Mammary epithelial cell (primary cell): ENCODE measurements at regions of chr3 and their contacts with region 1.

Region 1: DNA sequence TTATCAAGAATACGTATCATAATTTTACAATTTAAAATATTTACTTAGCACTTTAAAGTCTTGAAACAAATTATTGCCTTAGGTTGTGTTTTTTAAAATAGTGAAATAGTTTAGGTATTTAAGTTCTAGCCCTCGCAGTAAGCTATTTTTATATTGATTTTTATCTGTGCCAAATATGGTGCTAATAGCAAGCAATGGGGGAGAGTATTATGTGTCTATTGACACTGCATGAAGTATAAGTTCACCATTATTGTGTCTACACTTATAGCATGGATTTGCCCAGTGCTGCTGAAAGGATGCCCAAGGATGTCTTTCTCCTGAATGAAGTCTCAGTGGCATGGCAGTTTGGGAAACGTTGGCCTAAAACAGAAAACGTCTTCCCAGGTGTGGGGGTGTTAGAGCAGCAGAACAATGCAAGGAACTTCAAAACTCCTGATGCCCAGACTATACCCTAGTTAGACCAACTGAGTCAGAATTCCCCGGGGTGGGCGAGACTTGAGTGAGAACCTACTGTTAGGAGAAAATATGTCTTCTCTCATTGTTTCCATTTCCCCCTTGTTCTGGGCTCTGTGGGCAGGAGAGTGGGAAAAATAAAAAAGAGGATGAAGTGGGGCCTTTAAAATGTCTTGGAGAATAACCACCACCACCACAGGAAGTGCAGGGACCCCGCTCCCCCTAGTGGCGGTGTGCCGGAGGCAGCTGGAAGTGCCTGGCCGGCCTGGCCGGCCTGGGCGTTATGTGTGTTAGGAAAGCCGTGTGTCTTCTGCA is 104.2 kb upstream of the SLC7A14 start:
- DNase-seq: no peak
- H3K4me3 ChIP-seq: no peak overlapping the region
- H3K27ac ChIP-seq: peak overlapping the region; percentile 92
- H3K4me1 ChIP-seq: peaks cover 36% of the 10 kb centered on the region
- H3K27me3 ChIP-seq: no peaks in the 10 kb centered on the region
- CTCF ChIP-seq: peak; percentile 56 to 63

Region 2: GRCh38 chr3:170499565-170500156 is 190.4 kb before region 1 on chr3:
- CTCF ChIA-PET with region 1: interaction called, 4 read pairs
- dilution Hi-C with region 1: no loop called
- in situ Hi-C with region 1: no loop called
- intact Hi-C with region 1: loop called (anchors 5 kb)
- DNase-seq: peak; percentile 41
- H3K4me3 ChIP-seq: no peak overlapping the region
- H3K27ac ChIP-seq: no peak overlapping the region
- H3K4me1 ChIP-seq: peaks cover 8% of the 10 kb centered on the region
- H3K27me3 ChIP-seq: no peaks in the 10 kb centered on the region
- CTCF ChIP-seq: peak; percentile 60 to 80

Region 3: GRCh38 chr3:170531657-170532335 is 158.3 kb before region 1 on chr3:
- CTCF ChIA-PET with region 1: no interaction called
- dilution Hi-C with region 1: no loop called
- in situ Hi-C with region 1: no loop called
- intact Hi-C with region 1: no loop called
- DNase-seq: no peak
- H3K4me3 ChIP-seq: no peak overlapping the region
- H3K27ac ChIP-seq: no peak overlapping the region
- H3K4me1 ChIP-seq: no peaks in the 10 kb centered on the region
- H3K27me3 ChIP-seq: no peaks in the 10 kb centered on the region
- CTCF ChIP-seq: no peak

Region 4: DNA sequence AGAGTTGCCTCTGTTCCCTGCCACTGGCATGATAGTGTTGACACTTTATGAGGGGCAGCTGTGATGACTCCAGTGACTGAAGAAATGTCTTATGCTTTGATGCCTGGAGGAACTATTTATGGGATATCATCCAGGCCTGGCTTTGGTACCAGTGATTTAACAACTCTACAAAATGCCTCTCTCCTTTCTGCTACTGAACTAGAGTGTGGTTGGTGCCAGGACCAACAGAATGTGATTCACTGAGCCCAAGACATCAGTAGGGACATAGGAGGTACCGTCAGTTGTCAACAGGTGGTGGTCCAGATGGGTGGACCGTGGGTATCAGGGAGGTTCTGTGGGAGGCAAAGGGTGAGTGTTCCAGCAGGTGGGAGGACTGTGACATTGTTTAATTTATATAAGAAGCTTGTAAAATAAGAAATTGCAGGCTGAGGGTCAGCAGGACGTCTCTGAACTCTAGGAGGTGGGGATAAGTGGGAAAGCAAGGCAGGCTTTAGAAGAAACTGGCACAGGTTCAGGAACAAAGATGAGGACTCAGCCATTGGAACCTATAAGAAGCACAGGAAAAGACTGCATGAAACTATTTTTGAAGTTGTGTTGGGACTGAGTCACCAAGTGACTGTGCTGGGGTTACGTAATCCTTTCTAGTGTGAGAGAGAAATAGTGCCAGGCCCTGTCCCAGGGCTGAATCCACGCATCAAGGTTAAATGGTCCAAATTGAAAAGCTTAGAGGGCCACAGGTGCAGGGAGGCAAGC is 75.7 kb before region 1 on chr3:
- CTCF ChIA-PET with region 1: no interaction called
- dilution Hi-C with region 1: no loop called
- in situ Hi-C with region 1: no loop called
- intact Hi-C with region 1: loop called (anchors 2 kb)
- DNase-seq: peak; percentile 90
- H3K4me3 ChIP-seq: no peak overlapping the region
- H3K27ac ChIP-seq: peak overlapping the region; percentile 9
- H3K4me1 ChIP-seq: peaks cover 9% of the 10 kb centered on the region
- H3K27me3 ChIP-seq: no peaks in the 10 kb centered on the region
- CTCF ChIP-seq: no peak

Region 5: DNA sequence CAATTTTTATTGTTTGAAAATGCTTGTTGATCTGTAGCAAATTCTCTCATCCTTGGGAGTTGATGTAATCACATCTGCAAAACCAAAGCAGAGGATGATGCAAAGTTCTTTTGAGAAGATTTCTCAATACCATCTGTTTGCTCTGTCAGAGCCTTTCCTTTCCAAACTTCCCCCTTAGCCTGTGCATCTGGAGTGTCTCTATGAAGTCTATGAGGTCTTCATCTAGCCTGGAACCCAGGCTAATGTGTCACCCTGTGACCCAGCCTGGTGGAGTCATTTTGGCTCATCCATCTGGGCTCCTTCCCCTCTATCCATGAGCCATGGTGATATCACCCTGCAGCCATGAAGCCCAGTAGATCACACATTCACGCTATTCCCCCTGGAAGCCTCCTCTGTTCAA is 19.0 kb after region 1 on chr3:
- CTCF ChIA-PET with region 1: no interaction called
- dilution Hi-C with region 1: no loop called
- in situ Hi-C with region 1: no loop called
- intact Hi-C with region 1: loop called (anchors 2 kb)
- DNase-seq: peak; percentile 61
- H3K4me3 ChIP-seq: no peak overlapping the region
- H3K27ac ChIP-seq: no peak overlapping the region
- H3K4me1 ChIP-seq: peaks cover 49% of the 10 kb centered on the region
- H3K27me3 ChIP-seq: no peaks in the 10 kb centered on the region
- CTCF ChIP-seq: no peak

Region 6: DNA sequence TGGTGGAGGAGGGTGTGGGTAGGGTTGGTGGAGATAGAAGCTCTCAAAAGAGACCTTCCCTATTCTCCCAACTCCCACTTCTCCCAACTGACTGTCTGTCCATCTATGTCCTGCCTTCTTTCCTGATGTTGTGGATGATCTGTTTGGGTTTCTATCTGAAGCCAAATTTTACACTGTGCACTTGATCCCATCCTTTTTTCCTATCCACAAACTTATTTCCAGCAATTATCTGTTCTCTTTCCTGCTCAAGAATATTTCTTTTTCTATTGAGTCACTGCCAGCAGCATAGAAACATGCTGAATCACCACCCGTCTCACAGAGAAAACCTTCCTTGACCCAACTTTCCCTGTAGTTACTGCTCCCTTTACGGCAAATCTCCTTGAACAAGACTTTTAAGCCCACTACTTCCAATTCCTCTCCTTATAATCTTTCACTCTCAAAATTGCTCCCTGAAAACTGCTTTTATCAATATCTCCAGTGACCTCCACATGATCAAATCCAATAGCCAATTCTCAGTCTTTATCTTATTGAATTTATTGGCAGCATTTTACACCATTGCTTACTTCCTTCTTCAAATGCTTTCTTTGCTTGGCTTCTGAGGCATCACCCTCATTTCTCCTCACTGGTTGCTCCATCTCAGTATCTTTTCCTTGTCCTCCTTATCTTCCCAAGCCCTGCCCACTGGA is 37.0 kb after region 1 on chr3:
- CTCF ChIA-PET with region 1: no interaction called
- dilution Hi-C with region 1: no loop called
- in situ Hi-C with region 1: no loop called
- intact Hi-C with region 1: loop called (anchors 1 kb)
- DNase-seq: peak; percentile 84
- H3K4me3 ChIP-seq: peak overlapping the region in 2 of 3 experiments; percentile 4 to 12
- H3K27ac ChIP-seq: peak overlapping the region; percentile 97
- H3K4me1 ChIP-seq: peaks cover 42% of the 10 kb centered on the region
- H3K27me3 ChIP-seq: no peaks in the 10 kb centered on the region
- CTCF ChIP-seq: no peak

Region 7: GRCh38 chr3:170751083-170751898 is 61.2 kb after region 1 on chr3:
- CTCF ChIA-PET with region 1: interaction called, 6 read pairs
- dilution Hi-C with region 1: no loop called
- in situ Hi-C with region 1: no loop called
- intact Hi-C with region 1: loop called (anchors 5 kb)
- DNase-seq: peak; percentile 90
- H3K4me3 ChIP-seq: no peak overlapping the region
- H3K27ac ChIP-seq: peak overlapping the region; percentile 67
- H3K4me1 ChIP-seq: peaks cover 47% of the 10 kb centered on the region
- H3K27me3 ChIP-seq: no peaks in the 10 kb centered on the region
- CTCF ChIP-seq: no peak

Region 8: DNA sequence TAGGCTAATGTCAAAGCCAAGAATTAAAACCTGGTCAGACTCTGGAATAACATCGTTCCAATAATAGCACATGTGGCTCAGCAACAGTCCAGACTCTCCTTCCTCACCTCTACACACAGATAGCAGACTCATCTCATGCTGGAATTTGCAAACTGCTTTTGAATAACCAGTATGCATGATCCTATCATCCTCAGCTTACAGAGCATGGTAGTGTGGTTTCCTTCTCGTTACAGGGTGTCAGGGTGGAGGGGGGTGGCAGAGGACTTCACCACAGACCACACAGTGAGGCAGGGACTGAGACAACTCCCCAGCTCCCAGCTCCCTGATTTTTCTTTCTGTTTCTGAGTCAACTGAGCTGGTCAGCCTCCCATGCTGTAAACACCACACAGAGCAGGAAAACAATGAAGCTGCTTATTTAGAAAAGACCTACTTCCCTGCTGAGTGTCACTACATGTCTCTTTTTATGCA is 78.3 kb after region 1 on chr3:
- CTCF ChIA-PET with region 1: no interaction called
- dilution Hi-C with region 1: no loop called
- in situ Hi-C with region 1: no loop called
- intact Hi-C with region 1: no loop called
- DNase-seq: peak; percentile 20
- H3K4me3 ChIP-seq: no peak overlapping the region
- H3K27ac ChIP-seq: no peak overlapping the region
- H3K4me1 ChIP-seq: no peaks in the 10 kb centered on the region
- H3K27me3 ChIP-seq: no peaks in the 10 kb centered on the region
- CTCF ChIP-seq: no peak